Dorsolateral prefrontal cortex (tissue), 120 donors: ENCODE measurements at regions of chr17 and their contacts with region 1.

Region 1: DNA sequence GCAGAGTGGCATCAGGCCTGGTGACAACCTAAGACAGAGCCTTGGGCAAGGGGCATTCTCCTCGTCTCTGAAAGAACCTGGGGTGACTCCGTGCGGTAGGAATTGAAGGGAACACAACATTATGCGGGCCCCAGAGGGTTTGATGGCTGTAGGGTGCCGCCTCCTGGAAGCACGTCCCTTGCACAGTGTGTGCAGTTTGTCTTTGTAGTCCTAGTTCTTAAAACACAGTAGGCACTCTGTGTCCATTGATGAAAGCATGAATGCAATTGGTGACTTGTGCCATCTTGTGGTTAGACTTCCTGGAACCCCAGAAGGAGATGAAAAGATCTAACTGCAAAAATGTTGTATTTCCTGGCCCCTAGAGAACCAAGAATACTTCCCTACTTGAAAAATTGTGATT is 279.8 kb downstream of the UTP18 start:
- DNase-seq: peak in 9 of 10 donors; percentile 25 to 72 (median 47)
- H3K4me3 ChIP-seq: no peak overlapping the region
- H3K27ac ChIP-seq: peak overlapping the region in 45 of 59 donors; percentile 9 to 86 (median 67)
- H3K27me3 ChIP-seq: no peaks in the 10 kb centered on the region
- CTCF ChIP-seq: peak in 55 of 56 donors; percentile 38 to 85 (median 60)

Region 2: DNA sequence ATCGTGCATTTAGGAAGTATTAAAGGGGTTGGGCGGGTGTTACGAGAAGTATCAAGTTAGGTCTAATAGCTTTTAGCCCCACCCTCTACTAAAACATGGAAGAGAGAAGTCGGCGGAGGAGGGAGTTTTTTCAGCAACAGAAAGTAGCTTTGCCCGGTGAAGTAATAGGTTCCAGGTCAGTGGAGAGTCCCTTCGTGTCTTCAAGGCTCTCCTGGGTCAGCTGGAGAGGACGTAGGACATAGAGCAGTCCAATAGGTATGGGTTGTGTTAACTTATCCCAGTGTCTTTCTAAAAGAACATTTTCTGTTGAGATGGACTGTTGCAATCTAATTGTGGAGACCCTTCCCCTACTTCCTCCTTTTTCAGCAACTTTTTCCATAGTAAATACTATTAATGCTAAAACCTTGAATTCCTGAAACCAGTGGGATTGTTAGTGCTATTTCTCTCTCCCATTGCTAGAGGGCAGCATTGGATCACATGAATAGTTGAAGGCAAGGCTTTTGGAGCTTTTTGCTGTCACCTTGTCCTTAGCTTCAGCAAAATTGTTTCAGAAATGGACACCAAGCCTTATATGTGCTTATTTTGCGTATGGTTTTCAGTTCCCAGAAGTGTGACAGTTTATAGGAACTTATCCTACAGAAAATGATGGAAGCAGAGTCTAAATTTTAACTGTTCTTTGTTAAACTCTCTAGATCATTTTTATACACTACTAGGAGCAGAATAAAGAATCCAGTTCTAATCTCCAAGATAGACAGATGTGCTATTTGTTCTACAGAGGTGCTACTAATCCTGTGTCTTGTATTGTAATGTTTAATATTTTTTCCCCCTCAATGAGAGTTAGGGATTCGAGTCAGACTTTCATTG is 241.4 kb before region 1 on chr17:
- intact Hi-C with region 1: loop called (anchors 2 to 10 kb)
- DNase-seq: peak in 1 of 10 donors; percentile 17
- H3K4me3 ChIP-seq: no peak overlapping the region
- H3K27ac ChIP-seq: peak overlapping the region in 23 of 59 donors; percentile 8 to 81 (median 43)
- H3K27me3 ChIP-seq: no peaks in the 10 kb centered on the region
- CTCF ChIP-seq: peak; percentile 43 to 91 (median 74)

Region 3: DNA sequence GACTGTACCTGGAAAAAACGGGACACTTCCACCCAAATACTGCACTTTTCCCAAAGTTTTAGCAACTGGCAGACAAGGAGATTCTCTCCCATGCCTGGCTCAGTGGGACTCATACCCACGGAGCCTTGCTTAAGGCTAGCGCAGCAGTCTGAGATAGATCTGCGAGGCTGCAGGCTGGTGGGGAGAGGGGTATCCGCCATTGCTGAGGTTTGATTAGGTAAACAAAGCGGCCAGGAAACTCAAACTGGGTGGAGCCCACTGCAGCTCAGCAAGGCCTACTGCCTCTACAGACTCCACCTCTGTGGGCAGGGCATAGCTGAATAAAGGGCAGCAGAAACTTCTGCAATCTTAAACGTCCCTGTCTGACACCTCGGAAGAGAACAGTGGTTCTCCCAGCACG is 235.0 kb before region 1 on chr17:
- intact Hi-C with region 1: loop called in 1 of 2 experiments (anchors 10 kb)
- DNase-seq: no peak
- H3K4me3 ChIP-seq: no peak overlapping the region
- H3K27ac ChIP-seq: no peak overlapping the region
- H3K27me3 ChIP-seq: no peaks in the 10 kb centered on the region
- CTCF ChIP-seq: no peak